H1 (cell line): ENCODE measurements at regions of chr11 and their contacts with region 1.

Region 1: DNA sequence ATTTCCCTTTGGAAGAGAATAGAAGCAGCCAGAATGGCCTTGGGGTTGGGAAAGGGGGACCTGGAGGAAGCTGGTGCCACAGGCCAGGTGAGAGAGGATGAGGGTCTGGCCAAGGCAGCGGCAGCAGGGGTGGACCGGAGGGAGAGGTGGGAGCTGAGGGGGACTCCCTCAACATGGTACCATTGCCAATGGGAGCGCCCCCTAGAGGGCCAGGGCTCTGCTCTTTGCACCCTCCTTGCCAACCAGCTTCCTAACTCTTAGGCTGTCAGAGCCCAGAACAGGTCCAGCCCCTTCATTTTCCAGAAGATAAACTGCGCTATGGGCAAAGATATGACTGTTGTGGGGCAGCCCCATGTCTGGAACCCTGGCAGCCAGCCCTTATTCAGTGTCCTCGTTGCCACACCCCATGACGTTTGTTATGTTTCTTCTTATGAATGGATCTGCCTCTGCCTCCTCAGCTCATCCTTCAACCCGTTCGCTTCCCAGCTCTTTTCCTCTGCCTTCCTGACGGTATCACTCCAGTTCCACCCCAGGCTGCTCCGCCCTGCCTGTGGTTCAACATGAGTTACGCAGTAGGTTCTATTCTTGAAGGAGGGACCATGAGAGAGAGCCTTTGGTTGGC is 185.2 kb downstream of the GRIK4 start:
- DNase-seq: peak in 1 of 2 experiments; percentile 83
- H3K4me3 ChIP-seq: no peak overlapping the region
- H3K27ac ChIP-seq: no peak overlapping the region
- H3K4me1 ChIP-seq: peaks cover 0 to 7% (median 2%) of the 10 kb centered on the region in 4 experiments; a peak in 2 of 7 replicates
- H3K27me3 ChIP-seq: no peaks in the 10 kb centered on the region
- CTCF ChIP-seq: peak; percentile 60 to 77 (median 74)
- EP300 ChIP-seq: no peak
- POLR2A ChIP-seq: no peak
- RAD21 ChIP-seq: peak; percentile 24 to 45; a peak in 3 of 4 replicates

Region 2: DNA sequence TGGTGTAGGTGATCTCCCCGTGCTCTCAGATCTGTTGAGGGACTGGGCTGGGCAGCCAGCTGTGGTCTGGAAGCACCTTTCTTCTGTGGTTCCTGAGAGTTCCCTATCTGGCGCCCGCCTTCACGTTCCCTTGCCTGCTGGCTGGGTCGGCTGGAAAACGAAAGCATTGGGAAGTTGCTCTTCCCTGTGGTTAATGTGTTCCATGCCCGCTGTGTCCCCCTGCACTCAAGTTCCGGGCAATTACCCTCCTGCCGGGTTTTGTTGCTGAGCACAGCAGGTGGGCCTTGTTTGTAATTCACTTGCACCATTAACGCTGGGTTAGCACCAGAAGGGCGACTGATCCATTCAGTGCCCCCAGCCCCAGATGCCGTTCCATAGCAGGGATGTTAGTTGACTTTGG is 51.1 kb before region 1 on chr11:
- CTCF ChIA-PET with region 1: interaction called, 10 read pairs
- POLR2A ChIA-PET with region 1: no interaction called
- DNase-seq: peak; percentile 86 to 90
- H3K4me3 ChIP-seq: peak overlapping the region in 2 of 4 experiments; percentile 1 to 24; a peak in 1 of 8 replicates
- H3K27ac ChIP-seq: no peak overlapping the region
- H3K4me1 ChIP-seq: peaks cover 7 to 20% (median 11%) of the 10 kb centered on the region in 4 experiments
- H3K27me3 ChIP-seq: peaks cover 52 to 92% (median 82%) of the 10 kb centered on the region in 4 experiments
- CTCF ChIP-seq: no peak
- EP300 ChIP-seq: peak in 1 of 2 experiments; percentile 94; a peak in 2 of 3 replicates
- POLR2A ChIP-seq: no peak
- RAD21 ChIP-seq: peak in 1 of 2 experiments; percentile 26; a peak in 2 of 4 replicates

Region 3: GRCh38 chr11:120660024-120660565 is 36.6 kb before region 1 on chr11:
- CTCF ChIA-PET with region 1: interaction called, 14 read pairs
- POLR2A ChIA-PET with region 1: no interaction called
- DNase-seq: peak in 1 of 2 experiments; percentile 87
- H3K4me3 ChIP-seq: no peak overlapping the region
- H3K27ac ChIP-seq: no peak overlapping the region
- H3K4me1 ChIP-seq: peaks cover 3 to 6% (median 4%) of the 10 kb centered on the region in 4 experiments; a peak in 5 of 7 replicates
- H3K27me3 ChIP-seq: no peaks in the 10 kb centered on the region; a peak in 2 of 7 replicates
- CTCF ChIP-seq: peak; percentile 79 to 83 (median 81)
- EP300 ChIP-seq: no peak
- POLR2A ChIP-seq: no peak
- RAD21 ChIP-seq: peak; percentile 65 to 76

Region 4: DNA sequence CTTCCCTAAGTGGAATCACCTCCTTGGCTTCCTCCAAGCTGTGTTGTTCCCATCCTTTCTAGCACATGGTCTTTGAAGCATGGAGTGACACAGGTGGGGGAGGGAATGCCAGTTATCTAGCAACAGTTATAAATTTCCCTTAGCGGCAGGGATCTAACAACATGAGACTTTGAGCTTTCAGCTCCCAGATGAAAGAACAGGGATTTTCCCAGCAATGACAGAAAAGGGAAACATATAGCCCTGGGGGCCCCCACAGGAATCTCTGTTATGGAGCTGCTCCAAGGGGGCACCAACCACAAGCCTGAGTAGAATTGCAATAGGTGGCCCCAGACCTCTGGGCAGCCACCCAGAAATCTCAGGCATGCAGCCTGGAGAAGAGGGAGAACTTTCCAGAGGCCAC is 22.2 kb before region 1 on chr11:
- CTCF ChIA-PET with region 1: interaction called, 25 read pairs
- POLR2A ChIA-PET with region 1: no interaction called
- DNase-seq: no peak
- H3K4me3 ChIP-seq: no peak overlapping the region
- H3K27ac ChIP-seq: no peak overlapping the region
- H3K4me1 ChIP-seq: no peaks in the 10 kb centered on the region
- H3K27me3 ChIP-seq: no peaks in the 10 kb centered on the region
- CTCF ChIP-seq: no peak
- EP300 ChIP-seq: no peak
- POLR2A ChIP-seq: no peak
- RAD21 ChIP-seq: no peak

Region 5: GRCh38 chr11:120746836-120747609 is 50.3 kb after region 1 on chr11:
- CTCF ChIA-PET with region 1: interaction called, 28 read pairs
- POLR2A ChIA-PET with region 1: no interaction called
- DNase-seq: no peak
- H3K4me3 ChIP-seq: no peak overlapping the region
- H3K27ac ChIP-seq: no peak overlapping the region
- H3K4me1 ChIP-seq: peaks cover 2 to 8% (median 4%) of the 10 kb centered on the region in 4 experiments; a peak in 5 of 7 replicates
- H3K27me3 ChIP-seq: peaks cover 0 to 2% (median 0%) of the 10 kb centered on the region in 4 experiments; a peak in 1 of 7 replicates
- CTCF ChIP-seq: no peak
- EP300 ChIP-seq: no peak
- POLR2A ChIP-seq: no peak
- RAD21 ChIP-seq: no peak

Region 6: GRCh38 chr11:120912504-120912903 is 215.8 kb after region 1 on chr11:
- CTCF ChIA-PET with region 1: interaction called, 11 read pairs
- POLR2A ChIA-PET with region 1: no interaction called
- DNase-seq: no peak
- H3K4me3 ChIP-seq: no peak overlapping the region
- H3K27ac ChIP-seq: no peak overlapping the region
- H3K4me1 ChIP-seq: no peaks in the 10 kb centered on the region
- H3K27me3 ChIP-seq: no peaks in the 10 kb centered on the region; a peak in 1 of 7 replicates
- CTCF ChIP-seq: peak in 2 of 3 experiments; percentile 42 to 75; a peak in 2 of 4 replicates
- EP300 ChIP-seq: no peak
- POLR2A ChIP-seq: no peak
- RAD21 ChIP-seq: peak; percentile 28 to 49